Activated CD4-positive, alpha-beta T cell treated with anti-CD3 and anti-CD28 coated beads, Interleukin-2, amount 10 ng/mL, durations not matched to agents 24 days and 14 days (primary cell): ENCODE measurements at regions of chr3 and their contacts with region 1.

Region 1: DNA sequence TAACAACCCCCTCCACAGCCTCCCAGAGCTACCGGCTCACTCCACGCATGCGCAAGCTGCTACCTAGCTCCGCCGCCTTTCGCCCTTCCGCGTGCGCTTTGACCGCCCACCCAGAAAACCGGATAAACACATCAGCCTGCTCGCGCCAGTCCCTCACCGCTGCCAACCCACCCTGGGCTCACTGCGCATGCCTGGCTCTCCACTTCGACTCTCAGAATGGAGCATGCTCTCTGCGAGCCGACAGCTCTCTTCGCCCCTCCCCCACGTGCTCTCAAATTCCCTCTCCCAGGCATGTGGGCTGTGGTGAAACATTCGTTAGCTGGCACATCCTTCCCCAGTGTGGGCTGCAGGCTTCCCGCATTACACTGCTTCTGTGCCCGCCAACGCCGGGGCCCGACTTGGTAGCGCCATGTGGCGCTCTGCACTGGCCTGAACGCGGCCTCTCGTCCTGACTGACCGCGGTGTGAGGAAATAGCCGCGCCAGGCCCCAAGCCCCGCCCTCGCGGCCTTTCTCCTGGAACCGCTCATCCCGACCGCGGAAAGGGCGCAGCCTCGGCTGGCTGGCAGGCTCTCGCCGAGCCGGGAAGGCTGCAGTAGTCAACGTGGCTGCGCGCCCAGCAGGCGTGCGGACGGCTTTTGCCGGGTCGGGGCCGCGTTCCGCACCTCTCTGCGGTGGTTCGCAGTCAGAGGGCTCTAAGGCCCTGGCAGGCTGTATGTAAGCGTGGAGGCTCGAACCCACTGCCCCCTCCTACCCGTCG is 445 bp upstream of the MSL2 start:
- DNase-seq: peak; percentile 99
- H3K4me3 Mint-ChIP-seq: peak overlapping the region; percentile 98
- H3K27ac Mint-ChIP-seq: peak overlapping the region; percentile 96
- H3K4me1 Mint-ChIP-seq: peaks cover 43% of the 10 kb centered on the region
- H3K27me3 Mint-ChIP-seq: peaks cover 7% of the 10 kb centered on the region

Region 2: GRCh38 chr3:136075218-136075808 is 121.3 kb before region 1 on chr3:
- intact Hi-C with region 1: loop called (anchors 5 kb)
- DNase-seq: peak; percentile 92
- H3K4me3 Mint-ChIP-seq: no peak overlapping the region
- H3K27ac Mint-ChIP-seq: no peak overlapping the region
- H3K4me1 Mint-ChIP-seq: peaks cover 2% of the 10 kb centered on the region
- H3K27me3 Mint-ChIP-seq: peaks cover 10% of the 10 kb centered on the region

Region 3: DNA sequence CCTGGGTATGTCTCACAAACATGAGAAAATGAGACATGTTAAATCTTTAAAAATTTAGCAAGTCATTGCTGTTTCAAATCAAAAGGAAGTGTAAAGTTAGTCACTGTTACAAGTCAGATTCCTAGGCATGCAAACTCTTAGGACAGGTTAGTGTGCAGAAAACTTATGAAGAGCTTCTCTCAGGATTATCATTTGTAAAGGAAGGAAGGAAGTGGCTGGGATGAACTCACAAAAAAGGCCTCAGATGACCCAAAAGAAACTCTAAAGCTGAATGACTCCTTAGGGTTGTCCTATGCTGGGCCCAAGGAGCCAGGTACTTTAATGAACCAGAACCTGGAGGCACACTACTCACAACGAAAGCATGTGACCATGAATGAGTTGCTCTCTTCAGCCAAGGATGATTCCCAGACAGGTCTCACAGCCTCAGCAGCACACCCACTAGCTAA is 25.5 kb before region 1 on chr3:
- intact Hi-C with region 1: loop called (anchors 1 kb)
- DNase-seq: no peak
- H3K4me3 Mint-ChIP-seq: no peak overlapping the region
- H3K27ac Mint-ChIP-seq: peak overlapping the region; percentile 23
- H3K4me1 Mint-ChIP-seq: peaks cover 26% of the 10 kb centered on the region
- H3K27me3 Mint-ChIP-seq: no peaks in the 10 kb centered on the region

Region 4: DNA sequence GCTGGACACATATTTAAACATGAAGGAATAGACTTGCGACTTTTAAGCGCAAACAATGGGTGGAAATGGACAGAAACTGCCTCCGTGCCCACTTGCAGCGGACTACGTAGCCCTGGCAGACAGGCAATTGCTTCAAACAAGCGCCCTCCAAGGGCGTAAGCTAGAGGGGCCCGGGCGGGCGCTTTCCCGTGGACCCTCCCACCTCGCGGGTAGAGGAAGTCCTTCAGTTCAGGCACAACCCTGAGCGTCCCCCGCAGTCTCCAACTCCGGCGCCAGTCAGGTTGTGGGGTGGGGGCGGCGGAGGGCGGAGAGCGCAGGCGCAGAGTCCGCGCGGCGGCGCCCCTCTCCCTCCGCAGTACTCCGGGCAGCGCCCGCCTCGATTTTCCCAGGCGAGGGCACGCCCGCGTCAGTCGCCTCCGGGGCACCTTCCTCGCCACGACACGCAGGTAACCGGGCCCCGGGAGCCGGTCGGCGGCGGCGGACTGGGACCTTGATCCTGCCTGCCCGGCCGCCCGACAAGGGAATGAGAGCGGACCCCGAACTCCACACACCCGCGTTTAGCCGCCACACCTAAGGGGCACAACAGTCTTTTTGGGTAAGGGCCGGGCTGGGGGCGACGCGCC is 622.3 kb after region 1 on chr3 and contains the start of gene SLC35G2:
- intact Hi-C with region 1: loop called (anchors 2 kb)
- DNase-seq: peak; percentile 79
- H3K4me3 Mint-ChIP-seq: peak within 1 kb of the TSS; percentile 87
- H3K27ac Mint-ChIP-seq: peak within 1 kb of the TSS; percentile 81
- H3K4me1 Mint-ChIP-seq: peaks cover 21% of the 10 kb centered on the region
- H3K27me3 Mint-ChIP-seq: peaks cover 38% of the 10 kb centered on the region
- total RNA-seq, gene SLC35G2: 3.4 and 3.8 TPM in 2 replicates

Region 5: DNA sequence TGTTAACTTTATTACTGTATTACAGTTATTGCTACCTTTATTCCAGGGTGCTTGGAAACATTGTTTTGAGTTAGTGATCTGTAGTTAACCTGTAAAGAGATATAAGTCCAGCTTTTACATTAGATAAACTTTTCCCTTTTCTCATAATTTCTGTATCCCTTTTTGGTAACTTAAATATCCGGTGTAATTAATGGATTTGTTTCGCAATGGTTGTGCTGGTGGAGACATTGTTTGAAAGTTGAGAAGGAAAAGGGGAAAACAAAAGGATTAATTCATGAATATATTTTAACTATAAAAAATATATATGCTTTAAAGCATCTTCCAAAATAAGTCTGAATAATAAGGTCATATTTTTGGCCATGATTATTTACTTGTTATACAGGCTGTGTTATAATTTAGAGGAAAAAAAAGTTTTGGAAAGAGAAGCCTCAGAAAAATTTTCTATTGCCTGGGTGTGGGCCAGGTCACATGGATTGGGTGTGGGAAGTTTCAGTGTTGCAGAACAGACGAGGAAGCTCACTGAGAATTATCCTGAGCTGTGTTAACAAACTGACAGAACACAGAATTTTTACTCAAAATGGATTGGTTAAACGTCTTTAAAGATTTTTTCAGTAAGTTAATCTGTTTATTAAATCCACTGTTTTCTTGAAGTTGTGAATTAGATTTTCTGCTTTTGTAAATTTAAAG is 733.5 kb after region 1 on chr3:
- intact Hi-C with region 1: loop called (anchors 10 kb)
- DNase-seq: no peak
- H3K4me3 Mint-ChIP-seq: no peak overlapping the region
- H3K27ac Mint-ChIP-seq: no peak overlapping the region
- H3K4me1 Mint-ChIP-seq: peaks cover 40% of the 10 kb centered on the region
- H3K27me3 Mint-ChIP-seq: no peaks in the 10 kb centered on the region

Region 6: GRCh38 chr3:138068579-138069174 is 1872.1 kb after region 1 on chr3:
- intact Hi-C with region 1: loop called (anchors 5 kb)
- DNase-seq: peak; percentile 93
- H3K4me3 Mint-ChIP-seq: no peak overlapping the region
- H3K27ac Mint-ChIP-seq: no peak overlapping the region
- H3K4me1 Mint-ChIP-seq: peaks cover 12% of the 10 kb centered on the region
- H3K27me3 Mint-ChIP-seq: peaks cover 23% of the 10 kb centered on the region